ENCODE measurements at regions of chr7 and their contacts with region 1.

Region 1: GRCh38 chr7:50369143-50370026 is 64.9 kb downstream of the IKZF1 start:
- DNase-seq: peak; percentile 56
- H3K4me3 Mint-ChIP-seq: no peak overlapping the region
- H3K27ac Mint-ChIP-seq: peak overlapping the region; percentile 82
- H3K4me1 Mint-ChIP-seq: peaks cover 96% of the 10 kb centered on the region
- H3K27me3 Mint-ChIP-seq: no peaks in the 10 kb centered on the region

Region 2: GRCh38 chr7:50147951-50148808 is 221.2 kb before region 1 on chr7:
- CTCF ChIA-PET with region 1: interaction called, 20 read pairs
- POLR2A ChIA-PET with region 1: interaction called, 4 read pairs
- DNase-seq: no peak
- H3K4me3 Mint-ChIP-seq: no peak overlapping the region
- H3K27ac Mint-ChIP-seq: peak overlapping the region; percentile 29
- H3K4me1 Mint-ChIP-seq: peaks cover 48% of the 10 kb centered on the region
- H3K27me3 Mint-ChIP-seq: no peaks in the 10 kb centered on the region

Region 3: GRCh38 chr7:50304158-50304910 is 65.1 kb before region 1 on chr7 and contains the start of gene IKZF1:
- CTCF ChIA-PET with region 1: interaction called, 177 read pairs
- POLR2A ChIA-PET with region 1: interaction called, 566 read pairs
- DNase-seq: peak; percentile 58
- H3K4me3 Mint-ChIP-seq: peak within 1 kb of the TSS; percentile 88
- H3K27ac Mint-ChIP-seq: peak within 1 kb of the TSS; percentile 99
- H3K4me1 Mint-ChIP-seq: peaks cover 29% of the 10 kb centered on the region
- H3K27me3 Mint-ChIP-seq: peaks cover 8% of the 10 kb centered on the region
- total RNA-seq, gene IKZF1: 383 to 404 TPM

Region 4: GRCh38 chr7:50335795-50336754 is 33.3 kb before region 1 on chr7:
- CTCF ChIA-PET with region 1: interaction called, 50 read pairs
- POLR2A ChIA-PET with region 1: interaction called, 253 read pairs
- DNase-seq: peak; percentile 87
- H3K4me3 Mint-ChIP-seq: no peak overlapping the region
- H3K27ac Mint-ChIP-seq: no peak overlapping the region
- H3K4me1 Mint-ChIP-seq: no peaks in the 10 kb centered on the region
- H3K27me3 Mint-ChIP-seq: no peaks in the 10 kb centered on the region

Region 5: GRCh38 chr7:50397320-50397970 is 28.1 kb after region 1 on chr7:
- CTCF ChIA-PET with region 1: interaction called, 7 read pairs
- POLR2A ChIA-PET with region 1: interaction called, 19 read pairs
- DNase-seq: peak; percentile 47
- H3K4me3 Mint-ChIP-seq: peak overlapping the region; percentile 10
- H3K27ac Mint-ChIP-seq: peak overlapping the region; percentile 90
- H3K4me1 Mint-ChIP-seq: peaks cover 78% of the 10 kb centered on the region
- H3K27me3 Mint-ChIP-seq: no peaks in the 10 kb centered on the region

Region 6: GRCh38 chr7:50455658-50456057 is 86.3 kb after region 1 on chr7:
- CTCF ChIA-PET with region 1: no interaction called
- POLR2A ChIA-PET with region 1: no interaction called
- DNase-seq: no peak
- H3K4me3 Mint-ChIP-seq: no peak overlapping the region
- H3K27ac Mint-ChIP-seq: no peak overlapping the region
- H3K4me1 Mint-ChIP-seq: peaks cover 6% of the 10 kb centered on the region
- H3K27me3 Mint-ChIP-seq: peaks cover 20% of the 10 kb centered on the region

Region 7: GRCh38 chr7:50598460-50599343 is 229.3 kb after region 1 on chr7:
- CTCF ChIA-PET with region 1: no interaction called
- POLR2A ChIA-PET with region 1: no interaction called
- DNase-seq: no peak
- H3K4me3 Mint-ChIP-seq: no peak overlapping the region
- H3K27ac Mint-ChIP-seq: no peak overlapping the region
- H3K4me1 Mint-ChIP-seq: peaks cover 42% of the 10 kb centered on the region
- H3K27me3 Mint-ChIP-seq: peaks cover 4% of the 10 kb centered on the region

Measured in activated CD4-positive, alpha-beta memory T cell treated with anti-CD3 and anti-CD28 coated beads, Interleukin-2, amount 10 ng/mL, durations not matched to agents 7 days and 5 days (primary cell).